ENCODE measurements at regions of chr3 and their contacts with region 1.

Region 1: GRCh38 chr3:39499651-39500240 is 32.3 kb downstream of the MOBP start:
- DNase-seq: no peak

Region 2: GRCh38 chr3:39388741-39389248 is 111.0 kb before region 1 on chr3:
- intact Hi-C with region 1: no loop called
- DNase-seq: no peak

Region 3: DNA sequence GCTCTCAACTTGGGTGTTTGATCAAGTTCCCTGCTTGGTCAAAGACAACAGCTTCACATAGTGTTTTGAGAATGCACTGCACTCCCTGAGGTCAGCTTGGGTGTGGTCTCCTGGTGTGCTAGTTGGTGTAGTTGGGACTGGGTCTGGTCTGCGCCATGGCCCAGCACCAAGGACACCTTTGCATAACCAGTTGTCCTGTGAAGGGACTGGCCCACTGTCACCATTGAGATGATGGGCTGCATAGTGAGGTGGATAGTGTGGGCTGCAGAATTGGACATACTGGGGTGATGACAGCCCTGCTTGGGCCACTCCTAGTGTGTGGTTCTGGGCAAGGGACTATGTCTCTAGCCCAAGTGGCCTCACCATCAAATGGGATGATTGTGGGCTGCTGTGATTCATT is 83.8 kb before region 1 on chr3:
- intact Hi-C with region 1: loop called (anchors 2 kb)
- DNase-seq: no peak

Region 4: DNA sequence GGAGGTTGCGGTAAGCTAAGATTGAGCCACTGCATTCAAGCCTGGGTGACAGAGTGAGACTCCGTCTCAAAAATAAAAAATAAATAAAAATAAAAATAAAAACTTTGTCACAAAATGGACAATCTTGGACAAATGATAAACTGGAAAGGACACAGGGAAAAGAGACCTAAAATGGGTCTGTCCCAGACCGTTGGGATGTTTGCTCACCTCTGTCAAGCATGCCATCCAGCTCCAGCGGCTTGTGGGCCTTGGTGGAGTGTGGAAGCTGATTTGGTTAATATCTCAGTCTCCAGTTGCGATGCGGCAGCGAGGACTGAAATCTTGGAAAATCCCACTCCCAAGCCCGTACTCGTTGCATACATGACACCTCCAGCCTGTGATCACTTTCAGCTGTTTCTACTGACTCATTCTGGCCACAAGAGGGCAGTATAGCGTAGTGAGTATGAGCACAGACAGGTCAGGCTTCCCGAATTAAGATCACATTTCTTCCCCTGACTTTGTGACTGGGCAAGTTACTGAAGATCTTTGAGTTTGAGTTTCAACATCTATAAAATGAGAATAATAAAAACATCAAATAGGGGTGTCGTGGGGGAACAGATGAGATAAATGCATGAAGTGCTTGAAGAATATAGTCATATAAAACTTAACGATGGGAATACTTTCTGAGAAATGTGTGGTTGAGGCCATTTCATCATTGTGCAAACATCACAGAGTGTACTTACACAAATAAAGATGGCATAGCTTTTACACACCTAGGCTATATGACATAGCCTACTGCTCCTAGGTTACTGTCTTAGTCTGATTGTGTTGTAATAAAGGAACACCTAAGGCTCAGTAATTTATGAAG is 51.9 kb before region 1 on chr3:
- intact Hi-C with region 1: loop called (anchors 1 kb)
- DNase-seq: peak in 7 of 10 donors; percentile 49 to 90 (median 69)